Activated naive CD8-positive, alpha-beta T cell treated with anti-CD3 and anti-CD28 coated beads, Interleukin-2, amount 10 ng/mL, durations not matched to agents 7 days and 5 days (primary cell): ENCODE measurements at regions of chr14 and their contacts with region 1.

Region 1: DNA sequence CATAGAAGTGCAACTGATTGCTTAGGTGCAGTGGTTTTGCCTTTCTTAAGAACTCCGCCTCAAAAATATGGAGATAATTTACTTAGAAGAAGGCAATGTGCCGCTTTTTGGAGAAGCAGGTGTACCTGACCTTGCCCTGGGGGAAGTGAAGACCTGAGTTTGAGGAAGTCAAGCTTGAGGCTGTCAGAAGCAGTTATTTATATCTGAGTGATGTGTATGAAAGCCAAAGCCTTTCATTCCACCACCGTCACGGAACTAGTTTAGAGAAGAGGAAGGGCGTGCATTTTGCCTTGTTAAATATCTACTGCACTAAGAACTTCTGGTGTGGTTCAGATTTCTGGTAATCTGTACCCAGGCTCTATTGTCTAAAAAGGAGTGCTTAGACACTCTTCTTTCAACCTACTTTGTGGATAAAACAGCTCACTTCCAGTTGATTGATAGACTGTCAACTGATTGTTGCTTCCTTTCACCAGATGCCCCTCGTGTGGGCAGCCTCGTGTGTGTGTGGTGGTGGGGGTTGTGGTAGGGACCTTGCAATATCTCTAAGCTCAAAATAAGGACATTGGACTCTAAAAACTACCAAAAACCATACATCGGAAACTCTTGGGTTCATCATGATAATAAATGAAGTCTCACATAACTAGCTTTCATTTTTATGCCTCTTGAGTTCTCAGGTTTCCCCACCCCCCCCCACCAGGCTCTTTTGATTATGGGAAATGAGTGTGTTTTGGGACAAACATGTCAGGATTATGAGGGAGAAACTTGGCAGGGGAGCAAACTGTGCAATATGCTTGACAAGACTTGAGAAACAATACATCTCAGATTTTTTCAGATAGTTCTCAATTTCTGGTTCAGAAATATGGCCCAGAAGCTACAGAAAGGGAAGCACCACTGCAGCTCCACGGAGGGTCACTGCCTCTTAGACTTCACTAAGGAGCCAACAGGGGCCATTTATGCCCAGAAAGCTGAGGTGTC is 78.6 kb downstream of the ARF6 start:
- DNase-seq: peak; percentile 73
- ATAC-seq: peak; percentile 80
- H3K4me3 Mint-ChIP-seq: peak overlapping the region; percentile 91
- H3K27ac Mint-ChIP-seq: peak overlapping the region; percentile 99
- H3K4me1 Mint-ChIP-seq: peaks cover 50% of the 10 kb centered on the region
- H3K27me3 Mint-ChIP-seq: no peaks in the 10 kb centered on the region

Region 2: GRCh38 chr14:49892636-49893308 is 78.7 kb before region 1 on chr14 and contains the start of gene ARF6:
- POLR2A ChIA-PET with region 1: interaction called, 62 read pairs
- DNase-seq: peak; percentile 98
- ATAC-seq: peak; percentile 89
- H3K4me3 Mint-ChIP-seq: peak within 1 kb of the TSS; percentile 99
- H3K27ac Mint-ChIP-seq: peak within 1 kb of the TSS; percentile 99
- H3K4me1 Mint-ChIP-seq: peaks cover 16% of the 10 kb centered on the region
- H3K27me3 Mint-ChIP-seq: no peaks in the 10 kb centered on the region
- total RNA-seq, gene ARF6: 162 to 169 TPM

Region 3: GRCh38 chr14:49908432-49908781 is 63.0 kb before region 1 on chr14:
- POLR2A ChIA-PET with region 1: interaction called, 23 read pairs
- DNase-seq: no peak
- ATAC-seq: no peak
- H3K4me3 Mint-ChIP-seq: peak overlapping the region; percentile 50
- H3K27ac Mint-ChIP-seq: peak overlapping the region; percentile 67
- H3K4me1 Mint-ChIP-seq: peaks cover 37% of the 10 kb centered on the region
- H3K27me3 Mint-ChIP-seq: no peaks in the 10 kb centered on the region

Region 4: DNA sequence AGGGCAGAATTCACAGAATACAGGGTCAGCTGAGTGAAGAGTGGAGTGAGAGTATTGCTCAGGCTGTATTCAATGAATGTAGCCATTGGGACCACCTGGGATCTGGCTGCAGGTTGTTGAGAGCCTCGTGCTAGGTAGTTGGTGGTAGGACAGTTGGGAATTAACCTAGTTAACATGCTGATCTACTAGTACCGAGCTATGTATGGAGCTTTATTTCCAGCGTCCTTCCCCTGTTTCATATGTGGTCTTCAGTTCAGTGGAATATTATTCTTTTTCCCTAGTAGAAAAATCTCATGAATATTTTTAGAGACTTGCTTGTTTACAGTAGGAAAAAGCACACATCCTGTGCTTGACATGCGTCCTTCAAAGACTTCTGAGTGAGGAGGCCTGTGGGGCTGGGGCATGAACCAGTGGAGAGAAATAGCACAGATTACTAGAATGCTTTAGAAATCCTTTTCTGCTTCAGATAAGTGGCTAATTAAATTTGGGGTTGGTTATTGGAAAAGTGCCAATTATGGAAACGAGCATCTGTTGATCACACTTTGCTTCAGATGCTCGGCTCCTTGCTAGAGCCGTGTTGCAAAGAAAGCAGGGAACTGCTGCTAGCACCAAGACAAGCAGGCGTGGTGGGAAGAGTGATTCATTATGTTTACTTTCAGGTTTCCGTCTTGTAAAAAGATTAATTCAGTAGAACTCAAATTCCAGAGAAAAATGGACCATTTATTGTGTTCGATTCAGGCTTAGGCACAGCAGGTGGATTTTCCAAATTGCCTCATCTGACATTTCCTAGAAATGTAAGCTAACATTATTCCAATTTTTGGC is 24.9 kb before region 1 on chr14:
- POLR2A ChIA-PET with region 1: interaction called, 53 read pairs
- DNase-seq: no peak
- ATAC-seq: peak; percentile 66
- H3K4me3 Mint-ChIP-seq: peak overlapping the region; percentile 58
- H3K27ac Mint-ChIP-seq: peak overlapping the region; percentile 89
- H3K4me1 Mint-ChIP-seq: peaks cover 64% of the 10 kb centered on the region
- H3K27me3 Mint-ChIP-seq: no peaks in the 10 kb centered on the region

Region 5: GRCh38 chr14:50085570-50086320 is 114.3 kb after region 1 on chr14:
- POLR2A ChIA-PET with region 1: interaction called, 28 read pairs
- DNase-seq: no peak
- ATAC-seq: no peak
- H3K4me3 Mint-ChIP-seq: peak overlapping the region; percentile 69
- H3K27ac Mint-ChIP-seq: peak overlapping the region; percentile 94
- H3K4me1 Mint-ChIP-seq: peaks cover 76% of the 10 kb centered on the region
- H3K27me3 Mint-ChIP-seq: no peaks in the 10 kb centered on the region